ENCODE measurements at regions of chr3 and their contacts with region 1.

Region 1: DNA sequence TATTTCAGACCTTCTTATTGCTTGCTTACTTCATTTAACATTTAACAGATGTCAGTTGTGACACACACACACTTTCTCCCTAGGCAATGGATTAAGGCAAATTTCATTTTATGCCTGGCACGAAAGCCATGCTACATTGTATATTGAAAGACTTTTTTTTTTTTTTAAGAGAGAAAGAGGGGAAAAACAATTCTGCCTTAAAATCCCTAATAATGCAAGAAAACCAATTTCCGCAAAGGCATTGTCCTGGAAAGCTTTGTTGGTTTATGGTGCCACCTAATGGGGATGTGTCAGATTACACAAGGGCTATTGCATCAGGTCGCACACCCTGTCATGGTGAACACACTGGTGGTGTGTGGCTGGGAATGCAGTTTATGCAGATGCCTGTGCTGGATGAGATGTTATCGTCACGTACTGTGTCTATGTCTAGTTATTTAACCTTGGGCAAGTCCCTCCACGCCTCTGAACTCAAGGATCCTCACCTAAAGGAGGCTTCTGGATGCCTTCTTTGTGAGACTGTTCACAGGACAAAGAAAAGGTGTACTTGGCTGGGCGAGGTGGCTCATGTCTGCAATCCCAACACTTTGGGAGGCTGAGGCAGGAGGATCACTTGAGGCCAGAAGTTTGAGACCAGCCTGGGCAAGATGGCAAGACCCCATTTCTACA is 37.3 kb upstream of the RFTN1 start:
- DNase-seq: peak; percentile 83 to 85
- H3K4me3 ChIP-seq: no peak overlapping the region
- H3K4me1 ChIP-seq: peaks cover 11% of the 10 kb centered on the region
- H3K27me3 ChIP-seq: no peaks in the 10 kb centered on the region; the same call in 1 of the 2 replicates

Region 2: GRCh38 chr3:16286161-16286560 is 264.6 kb before region 1 on chr3:
- in situ Hi-C with region 1: loop called (anchors 5 kb)
- DNase-seq: no peak
- H3K4me3 ChIP-seq: no peak overlapping the region
- H3K4me1 ChIP-seq: peaks cover 5% of the 10 kb centered on the region; the same call in 1 of the 2 replicates
- H3K27me3 ChIP-seq: no peaks in the 10 kb centered on the region

Region 3: GRCh38 chr3:16349986-16350596 is 200.7 kb before region 1 on chr3:
- in situ Hi-C with region 1: no loop called
- DNase-seq: no peak
- H3K4me3 ChIP-seq: no peak overlapping the region
- H3K4me1 ChIP-seq: no peaks in the 10 kb centered on the region
- H3K27me3 ChIP-seq: no peaks in the 10 kb centered on the region